PC-3 (cell line): ENCODE measurements at regions of chr11 and their contacts with region 1.

Region 1: DNA sequence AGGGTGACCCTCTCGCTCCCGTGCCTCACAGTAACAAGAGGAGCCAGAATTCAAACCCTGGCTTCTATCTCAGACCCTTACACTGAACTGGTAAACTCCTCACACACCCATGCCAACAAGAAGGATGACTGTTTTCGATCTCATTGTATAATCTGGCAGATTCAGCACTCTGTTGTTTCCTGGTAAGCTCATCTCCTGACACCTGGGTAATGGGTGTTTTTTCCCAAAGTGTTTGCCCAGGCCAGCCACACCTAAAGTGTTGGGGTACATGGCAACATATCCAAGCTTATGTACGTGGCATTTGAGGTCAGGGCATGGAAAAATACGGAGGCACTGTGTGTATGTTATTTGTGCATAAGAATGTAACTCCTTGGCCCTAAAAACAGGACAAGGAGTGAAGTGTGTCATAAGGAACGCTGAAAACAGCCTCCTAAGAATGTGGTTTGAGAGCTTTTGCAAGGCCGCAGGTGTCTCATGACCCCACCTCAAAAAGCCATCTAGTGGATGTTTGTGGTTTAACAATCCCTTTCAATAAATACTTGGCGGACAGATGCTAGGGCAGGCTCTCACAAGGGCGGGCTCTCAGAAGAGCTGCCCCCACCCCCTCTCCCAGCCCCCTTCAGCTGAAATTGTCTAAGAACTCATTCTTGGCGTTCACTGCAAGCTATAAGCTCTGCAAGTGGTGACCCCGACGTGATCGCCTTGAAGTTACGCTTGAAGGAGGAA is at the start of gene MS4A15:
- DNase-seq: peak; percentile 83
- ATAC-seq: peak; percentile 68; the same call in 1 of the 2 replicates
- H3K4me3 ChIP-seq: no peak within 1 kb of the TSS
- H3K27ac ChIP-seq: no peak within 1 kb of the TSS
- H3K4me1 ChIP-seq: no peaks in the 10 kb centered on the region
- H3K27me3 ChIP-seq: peaks cover 65% of the 10 kb centered on the region
- CTCF ChIP-seq: peak; percentile 72
- total RNA-seq, gene MS4A15: not detected in 2 replicates

Region 2: DNA sequence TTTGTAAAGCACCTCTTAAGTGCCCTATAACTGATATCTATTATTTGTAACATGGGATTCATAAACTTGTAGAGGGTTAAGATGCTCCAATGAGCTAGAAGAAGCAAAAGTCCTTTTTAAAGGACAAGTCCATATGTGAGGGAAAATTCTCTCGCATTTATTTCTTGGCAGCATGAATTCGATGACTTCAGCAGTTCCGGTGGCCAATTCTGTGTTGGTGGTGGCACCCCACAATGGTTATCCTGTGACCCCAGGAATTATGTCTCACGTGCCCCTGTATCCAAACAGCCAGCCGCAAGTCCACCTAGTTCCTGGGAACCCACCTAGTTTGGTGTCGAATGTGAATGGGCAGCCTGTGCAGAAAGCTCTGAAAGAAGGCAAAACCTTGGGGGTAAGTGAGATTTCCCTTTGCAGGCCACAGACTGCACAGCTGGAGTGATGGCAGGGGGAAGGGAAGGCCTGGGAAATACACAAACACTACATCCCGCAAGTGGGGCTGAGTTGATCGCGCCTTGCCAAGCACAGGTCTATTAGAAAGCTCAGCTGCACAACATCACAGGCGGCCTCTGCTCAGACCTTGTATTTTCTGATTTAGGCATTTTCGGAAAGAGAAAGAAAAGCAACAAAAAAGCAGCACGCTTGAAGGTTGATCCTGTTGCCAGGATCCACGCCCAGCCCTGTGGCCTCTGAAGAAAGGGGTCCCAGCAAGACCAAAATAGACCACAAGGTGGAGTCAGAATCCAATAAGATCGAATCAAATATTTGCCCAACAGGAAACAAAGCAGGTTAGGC is 55.6 kb before region 1 on chr11:
- CTCF ChIA-PET with region 1: no interaction called
- POLR2A ChIA-PET with region 1: no interaction called
- intact Hi-C with region 1: loop called (anchors 2 kb)
- DNase-seq: peak; percentile 79
- ATAC-seq: peak; percentile 64
- H3K4me3 ChIP-seq: no peak overlapping the region; the same call in 1 of the 2 replicates
- H3K27ac ChIP-seq: no peak overlapping the region
- H3K4me1 ChIP-seq: 0 out of 2 replicates have a peak, but pooled peaks cover 4% of the 10 kb centered on the region
- H3K27me3 ChIP-seq: peaks cover 44% of the 10 kb centered on the region; the same call in 1 of the 2 replicates
- CTCF ChIP-seq: peak; percentile 83

Region 3: GRCh38 chr11:60739114-60739513 is 17.4 kb before region 1 on chr11:
- CTCF ChIA-PET with region 1: no interaction called
- POLR2A ChIA-PET with region 1: no interaction called
- intact Hi-C with region 1: no loop called
- DNase-seq: no peak
- ATAC-seq: no peak
- H3K4me3 ChIP-seq: no peak overlapping the region
- H3K27ac ChIP-seq: no peak overlapping the region
- H3K4me1 ChIP-seq: no peaks in the 10 kb centered on the region
- H3K27me3 ChIP-seq: peaks cover 49% of the 10 kb centered on the region
- CTCF ChIP-seq: no peak; the same call in 1 of the 2 replicates